ENCODE measurements at regions of chr1 and their contacts with region 1.

Region 1: GRCh38 chr1:11790880-11791715 is 14.7 kb downstream of the MTHFR start:
- DNase-seq: peak; percentile 87 to 97
- ATAC-seq: peak; percentile 80 to 92 (median 88)
- H3K4me3 ChIP-seq: peak overlapping the region in 2 of 10 donors; percentile 15 to 20
- H3K27ac ChIP-seq: peak overlapping the region; percentile 92 to 99 (median 97)
- H3K4me1 ChIP-seq: peaks cover 58 to 99% (median 85%) of the 10 kb centered on the region in 9 donors
- H3K27me3 ChIP-seq: no peaks in the 10 kb centered on the region
- CTCF ChIP-seq: no peak

Region 2: GRCh38 chr1:11882814-11883538 is 91.9 kb after region 1 on chr1:
- intact Hi-C with region 1: loop called in 1 of 10 experiments (anchors 5 kb)
- DNase-seq: peak; percentile 84 to 87
- ATAC-seq: peak; percentile 60 to 80 (median 72)
- H3K4me3 ChIP-seq: no peak overlapping the region
- H3K27ac ChIP-seq: peak overlapping the region; percentile 76 to 94 (median 87)
- H3K4me1 ChIP-seq: peaks cover 29 to 86% (median 71%) of the 10 kb centered on the region in 9 donors
- H3K27me3 ChIP-seq: no peaks in the 10 kb centered on the region
- CTCF ChIP-seq: no peak

Region 3: GRCh38 chr1:12095452-12096263 is 304.6 kb after region 1 on chr1:
- intact Hi-C with region 1: no loop called
- DNase-seq: no peak
- ATAC-seq: no peak
- H3K4me3 ChIP-seq: no peak overlapping the region
- H3K27ac ChIP-seq: no peak overlapping the region
- H3K4me1 ChIP-seq: no peaks in the 10 kb centered on the region
- H3K27me3 ChIP-seq: no peaks in the 10 kb centered on the region
- CTCF ChIP-seq: no peak

Region 4: DNA sequence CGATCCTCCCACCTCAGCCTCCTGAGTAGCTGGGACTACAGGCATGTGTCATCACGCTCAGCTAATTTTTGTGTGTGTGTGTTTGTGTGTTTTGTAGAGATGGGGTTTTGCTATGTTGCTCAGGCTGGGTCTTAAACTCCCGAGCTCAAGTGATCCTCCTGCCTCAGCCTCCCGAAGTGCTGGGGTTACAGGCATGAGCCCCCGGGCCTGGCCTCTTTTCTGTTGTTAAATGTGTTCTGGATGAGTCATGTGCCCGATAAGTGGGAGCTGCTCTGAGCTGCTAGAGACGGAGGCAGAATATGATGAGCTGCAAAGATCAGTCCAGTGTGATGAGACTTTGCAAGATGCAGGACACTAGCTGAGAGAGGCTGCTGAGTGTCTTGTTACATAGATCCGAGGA is 514.3 kb after region 1 on chr1:
- intact Hi-C with region 1: no loop called
- DNase-seq: no peak
- ATAC-seq: no peak
- H3K4me3 ChIP-seq: no peak overlapping the region
- H3K27ac ChIP-seq: no peak overlapping the region
- H3K4me1 ChIP-seq: peaks cover 2 to 36% (median 25%) of the 10 kb centered on the region in 9 donors
- H3K27me3 ChIP-seq: no peaks in the 10 kb centered on the region
- CTCF ChIP-seq: no peak

Measured in heart right ventricle (tissue), 16 donors.